Right cardiac atrium (tissue), 5 donors: ENCODE measurements at regions of chr13 and their contacts with region 1.

Region 1: DNA sequence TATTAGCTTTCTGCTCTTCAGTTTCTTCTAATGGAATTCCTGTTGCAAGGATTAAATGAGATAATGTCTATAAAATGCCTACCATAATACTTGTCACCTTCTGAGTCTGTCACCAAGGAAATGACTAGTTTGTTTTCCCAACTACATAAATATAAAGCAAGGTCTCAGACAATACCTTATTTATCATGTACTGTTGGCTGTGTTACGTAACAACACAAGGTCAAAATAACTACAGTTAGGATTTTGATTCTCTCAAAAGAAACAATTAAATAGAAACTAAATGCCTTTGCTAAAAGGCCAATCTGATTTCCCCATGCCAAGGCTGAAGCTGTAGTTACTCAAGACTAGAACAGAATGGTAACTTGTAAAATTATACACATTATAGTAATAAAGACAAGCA is 134.5 kb downstream of the PCDH9 start:
- DNase-seq: no peak
- ATAC-seq: no peak
- H3K4me3 ChIP-seq: no peak overlapping the region
- H3K27ac ChIP-seq: no peak overlapping the region
- H3K4me1 ChIP-seq: no peaks in the 10 kb centered on the region
- H3K27me3 ChIP-seq: no peaks in the 10 kb centered on the region

Region 2: DNA sequence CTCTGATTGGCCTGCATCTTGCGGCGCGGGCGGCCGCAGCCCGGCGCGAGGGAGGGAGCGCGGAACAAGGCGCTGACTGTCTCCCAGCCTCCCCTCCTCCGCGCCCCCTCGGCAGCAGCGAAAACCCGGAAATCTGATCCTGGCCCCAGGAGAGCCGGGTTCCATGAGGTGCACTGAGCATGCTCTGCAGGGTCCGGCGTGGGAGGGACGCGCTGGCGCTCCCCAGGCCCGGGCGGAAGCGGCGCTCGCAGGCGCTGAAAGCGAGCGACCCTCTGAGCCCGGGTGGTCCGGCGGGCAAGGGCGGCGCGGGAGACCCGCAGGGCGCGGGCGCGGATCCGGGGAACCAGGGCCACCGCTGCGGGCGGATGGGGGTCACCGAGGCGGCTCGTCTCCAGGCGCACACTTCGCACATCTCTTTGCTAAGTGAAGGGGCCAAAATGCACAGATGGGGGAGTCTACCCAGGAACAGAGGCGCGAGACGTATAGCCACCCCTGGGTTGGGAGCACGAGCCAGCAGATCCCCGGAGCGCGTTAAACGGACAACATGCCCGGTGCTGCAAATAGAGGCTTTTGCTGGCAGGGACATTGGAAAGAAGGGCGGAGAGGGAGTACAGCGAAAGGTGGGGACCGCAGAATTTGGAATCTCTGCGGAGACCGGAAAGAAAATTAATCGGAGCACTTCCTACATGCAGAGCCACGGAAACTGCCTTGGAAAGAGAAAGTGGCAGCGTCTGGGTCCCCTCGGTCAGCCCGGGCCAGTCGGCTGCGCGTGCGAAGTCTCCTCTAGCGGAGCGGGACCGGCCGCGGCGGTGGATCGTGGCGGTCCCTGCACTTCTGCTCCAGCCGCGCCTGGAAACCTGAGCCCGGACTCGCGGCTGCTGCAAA is 135.0 kb after region 1 on chr13:
- intact Hi-C with region 1: loop called in 1 of 4 experiments (anchors 5 kb)
- DNase-seq: peak; percentile 96 to 99 (median 99)
- ATAC-seq: peak; percentile 99 to 100
- H3K4me3 ChIP-seq: peak overlapping the region; percentile 82
- H3K27ac ChIP-seq: peak overlapping the region; percentile 98
- H3K4me1 ChIP-seq: peaks cover 4% of the 10 kb centered on the region
- H3K27me3 ChIP-seq: no peaks in the 10 kb centered on the region